ENCODE measurements at regions of chr15 and their contacts with region 1.

Region 1: GRCh38 chr15:57866149-57866736 is 159.7 kb downstream of the POLR2M start:
- DNase-seq: peak; percentile 42
- H3K4me3 ChIP-seq: peak overlapping the region in 1 of 2 experiments; percentile 51; a peak in 1 of 4 replicates
- H3K27ac ChIP-seq: no peak overlapping the region
- H3K4me1 ChIP-seq: no peaks in the 10 kb centered on the region
- H3K27me3 ChIP-seq: no peaks in the 10 kb centered on the region
- CTCF ChIP-seq: peak; percentile 70
- EP300 ChIP-seq: no peak
- RAD21 ChIP-seq: peak; percentile 69

Region 2: GRCh38 chr15:57854531-57854930 is 11.7 kb before region 1 on chr15:
- CTCF ChIA-PET with region 1: interaction called, 41 read pairs
- POLR2A ChIA-PET with region 1: no interaction called
- DNase-seq: no peak
- H3K4me3 ChIP-seq: no peak overlapping the region
- H3K27ac ChIP-seq: no peak overlapping the region
- H3K4me1 ChIP-seq: no peaks in the 10 kb centered on the region
- H3K27me3 ChIP-seq: no peaks in the 10 kb centered on the region; the same call in 1 of the 2 replicates
- CTCF ChIP-seq: no peak
- EP300 ChIP-seq: no peak
- RAD21 ChIP-seq: no peak